ENCODE measurements at regions of chr14 and their contacts with region 1.

Region 1: GRCh38 chr14:22872033-22872832 is 693 bp downstream of the LRP10 start:
- DNase-seq: peak; percentile 79 to 93 (median 83)
- ATAC-seq: peak; percentile 71
- H3K4me3 ChIP-seq: peak overlapping the region; percentile 87
- H3K27ac ChIP-seq: peak overlapping the region; percentile 98
- H3K4me1 ChIP-seq: peaks cover 12 to 36% of the 10 kb centered on the region in 2 experiments
- H3K27me3 ChIP-seq: no peaks in the 10 kb centered on the region
- CTCF ChIP-seq: peak; percentile 86 to 98 (median 96)
- EP300 ChIP-seq: no peak
- POLR2A ChIP-seq: peak; percentile 30
- RAD21 ChIP-seq: peak; percentile 69 to 73

Region 2: DNA sequence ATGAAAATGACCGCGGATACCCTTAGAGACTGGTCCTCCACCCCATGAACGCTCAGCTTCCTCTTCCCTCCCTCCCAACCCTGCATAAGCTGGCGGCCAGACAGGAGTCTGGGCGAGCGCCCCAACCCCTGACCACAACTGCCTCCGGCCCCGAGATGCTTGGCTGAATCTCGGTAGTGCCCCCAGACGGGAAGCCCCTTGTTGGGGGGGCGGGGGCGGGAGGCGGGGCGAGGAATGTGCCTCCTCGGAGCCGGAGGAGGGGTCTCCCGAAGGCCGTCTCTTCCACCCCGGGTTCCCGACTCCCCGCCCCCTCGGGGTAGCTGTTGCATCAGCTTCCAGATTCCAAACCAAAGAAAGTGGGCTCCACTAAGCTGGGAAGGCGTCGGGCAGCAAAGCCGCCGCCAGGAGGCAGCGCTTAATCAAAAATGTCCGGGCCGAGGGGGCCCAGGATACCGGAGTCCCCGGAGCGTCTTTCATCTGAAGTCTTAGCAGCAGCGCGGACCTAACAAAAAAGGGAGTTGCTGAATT is 49.6 kb before region 1 on chr14:
- CTCF ChIA-PET with region 1: interaction called, 5 read pairs
- POLR2A ChIA-PET with region 1: interaction called, 5 read pairs
- in situ Hi-C with region 1: no loop called
- intact Hi-C with region 1: loop called (anchors 5 kb)
- DNase-seq: peak; percentile 77 to 87 (median 82)
- ATAC-seq: peak; percentile 88
- H3K4me3 ChIP-seq: no peak overlapping the region
- H3K27ac ChIP-seq: no peak overlapping the region
- H3K4me1 ChIP-seq: peaks cover 18 to 30% of the 10 kb centered on the region in 2 experiments; a peak in 4 of 5 replicates
- H3K27me3 ChIP-seq: no peaks in the 10 kb centered on the region
- CTCF ChIP-seq: peak; percentile 89 to 95 (median 91)
- EP300 ChIP-seq: 0 out of 2 replicates have a peak, but pooled peaks have one; percentile 5
- POLR2A ChIP-seq: no peak
- RAD21 ChIP-seq: peak; percentile 92 to 94

Region 3: GRCh38 chr14:22861651-22862050 is 10.6 kb before region 1 on chr14:
- CTCF ChIA-PET with region 1: no interaction called
- POLR2A ChIA-PET with region 1: interaction called, 10 read pairs
- in situ Hi-C with region 1: no loop called
- intact Hi-C with region 1: no loop called
- DNase-seq: no peak
- ATAC-seq: no peak
- H3K4me3 ChIP-seq: no peak overlapping the region
- H3K27ac ChIP-seq: no peak overlapping the region
- H3K4me1 ChIP-seq: peaks cover 0 to 11% of the 10 kb centered on the region in 2 experiments; a peak in 2 of 5 replicates
- H3K27me3 ChIP-seq: no peaks in the 10 kb centered on the region
- CTCF ChIP-seq: no peak
- EP300 ChIP-seq: no peak
- POLR2A ChIP-seq: no peak
- RAD21 ChIP-seq: no peak

Region 4: GRCh38 chr14:22886500-22887259 is 14.4 kb after region 1 on chr14:
- CTCF ChIA-PET with region 1: interaction called, 3 read pairs
- POLR2A ChIA-PET with region 1: interaction called, 60 read pairs
- in situ Hi-C with region 1: no loop called
- intact Hi-C with region 1: loop called (anchors 1 kb)
- DNase-seq: peak; percentile 91 to 93 (median 92)
- ATAC-seq: peak; percentile 84
- H3K4me3 ChIP-seq: peak overlapping the region; percentile 63
- H3K27ac ChIP-seq: peak overlapping the region; percentile 81
- H3K4me1 ChIP-seq: peaks cover 26 to 40% of the 10 kb centered on the region in 2 experiments
- H3K27me3 ChIP-seq: no peaks in the 10 kb centered on the region
- CTCF ChIP-seq: peak in 2 of 3 experiments; percentile 36 to 41; a peak in 4 of 6 replicates
- EP300 ChIP-seq: no peak
- POLR2A ChIP-seq: peak; percentile 84
- RAD21 ChIP-seq: no peak

Region 5: DNA sequence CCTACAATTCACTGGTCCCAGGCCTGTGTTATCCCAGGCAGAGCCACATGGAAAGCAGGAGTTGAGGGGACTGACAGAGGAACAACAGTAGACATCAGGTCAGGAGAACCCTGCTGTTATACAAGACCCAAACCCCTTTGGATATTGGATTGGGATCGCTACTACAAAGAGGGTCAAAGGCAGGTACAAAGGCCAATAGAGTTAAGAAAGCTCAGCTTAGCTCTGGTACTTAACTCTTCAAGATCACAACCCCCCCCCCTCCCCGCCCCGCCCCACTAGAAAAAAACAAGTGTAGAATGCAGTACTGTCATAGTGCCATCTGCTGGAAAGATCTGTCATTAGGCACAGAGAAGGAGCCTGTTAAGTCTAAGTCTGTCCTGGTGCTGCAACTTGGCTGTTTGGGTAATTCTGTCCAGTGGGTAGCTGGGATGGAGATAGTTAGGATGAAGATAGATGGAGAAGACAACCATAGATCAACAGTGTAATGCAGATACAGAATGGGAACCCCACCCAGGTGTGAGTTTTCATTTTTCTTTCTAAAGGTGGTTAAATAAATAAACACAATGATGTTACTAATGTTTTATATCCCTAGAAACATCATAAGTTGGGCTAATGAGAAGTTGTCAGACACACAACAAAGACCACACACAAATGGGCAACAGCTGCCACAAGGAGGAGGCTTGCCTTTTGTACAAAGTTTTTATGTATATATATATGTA is 28.0 kb after region 1 on chr14:
- CTCF ChIA-PET with region 1: interaction called, 18 read pairs
- POLR2A ChIA-PET with region 1: interaction called, 3 read pairs
- in situ Hi-C with region 1: no loop called
- intact Hi-C with region 1: loop called (anchors 1 kb)
- DNase-seq: peak; percentile 71 to 91 (median 79)
- ATAC-seq: peak; percentile 80
- H3K4me3 ChIP-seq: no peak overlapping the region
- H3K27ac ChIP-seq: no peak overlapping the region
- H3K4me1 ChIP-seq: peaks cover 5 to 39% of the 10 kb centered on the region in 2 experiments; a peak in 2 of 5 replicates
- H3K27me3 ChIP-seq: no peaks in the 10 kb centered on the region
- CTCF ChIP-seq: peak; percentile 73 to 84 (median 83)
- EP300 ChIP-seq: no peak
- POLR2A ChIP-seq: no peak
- RAD21 ChIP-seq: peak; percentile 57 to 68

Region 6: GRCh38 chr14:22918804-22919600 is 46.8 kb after region 1 on chr14 and contains the start of gene RBM23:
- CTCF ChIA-PET with region 1: no interaction called
- POLR2A ChIA-PET with region 1: interaction called, 7 read pairs
- in situ Hi-C with region 1: no loop called
- intact Hi-C with region 1: loop called (anchors 5 kb)
- DNase-seq: peak; percentile 95 to 100 (median 97)
- ATAC-seq: peak; percentile 96
- H3K4me3 ChIP-seq: peak within 1 kb of the TSS; percentile 68
- H3K27ac ChIP-seq: peak within 1 kb of the TSS; percentile 94
- H3K4me1 ChIP-seq: peaks cover 0 to 25% of the 10 kb centered on the region in 2 experiments; a peak in 4 of 5 replicates
- H3K27me3 ChIP-seq: no peaks in the 10 kb centered on the region
- CTCF ChIP-seq: peak in 1 of 3 experiments; percentile 8; a peak in 1 of 6 replicates
- EP300 ChIP-seq: no peak
- POLR2A ChIP-seq: peak; percentile 92
- RAD21 ChIP-seq: no peak
- polyA plus RNA-seq, gene RBM23: 67.8 to 102 TPM

Region 7: DNA sequence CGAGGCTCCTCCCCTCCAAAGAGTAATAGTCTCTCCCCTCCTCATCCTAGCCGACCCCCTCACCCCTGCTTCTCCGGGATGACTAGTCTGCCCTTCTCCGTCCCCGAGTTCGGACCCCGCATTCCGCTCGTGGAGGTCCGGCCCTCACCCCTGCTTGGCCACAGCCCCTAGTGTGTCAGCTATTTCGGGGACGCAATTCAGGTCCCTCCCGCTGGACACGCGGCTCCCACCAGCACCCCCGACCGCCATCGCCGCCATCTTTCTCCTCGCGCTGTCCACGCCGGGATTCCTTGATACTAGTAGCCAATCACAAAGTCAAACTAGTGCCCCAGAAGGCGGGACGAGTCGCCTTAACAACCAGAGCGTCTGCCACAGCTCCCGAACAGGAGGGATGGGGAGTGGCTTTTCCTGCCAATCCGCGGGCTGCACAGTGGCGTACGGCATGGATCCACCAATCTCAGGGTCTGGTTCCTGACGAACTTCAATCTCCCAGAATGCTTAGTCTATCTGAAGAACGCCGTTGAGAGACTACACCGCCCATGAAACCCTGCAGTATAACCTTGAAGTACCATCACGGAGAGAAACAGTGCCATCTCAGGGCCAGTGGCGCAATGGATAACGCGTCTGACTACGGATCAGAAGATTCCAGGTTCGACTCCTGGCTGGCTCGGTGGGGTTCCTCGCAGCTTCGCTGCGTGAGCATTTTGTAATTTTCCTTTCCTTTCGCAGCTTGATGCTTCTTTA is 57.0 kb after region 1 on chr14 and contains the start of gene PRMT5:
- CTCF ChIA-PET with region 1: no interaction called
- POLR2A ChIA-PET with region 1: interaction called, 3 read pairs
- in situ Hi-C with region 1: no loop called
- intact Hi-C with region 1: loop called (anchors 1 kb)
- DNase-seq: peak; percentile 94 to 99 (median 96)
- ATAC-seq: peak; percentile 96
- H3K4me3 ChIP-seq: peak within 1 kb of the TSS; percentile 80
- H3K27ac ChIP-seq: peak within 1 kb of the TSS; percentile 88
- H3K4me1 ChIP-seq: peaks cover 5 to 14% of the 10 kb centered on the region in 2 experiments; a peak in 3 of 5 replicates
- H3K27me3 ChIP-seq: no peaks in the 10 kb centered on the region
- CTCF ChIP-seq: peak in 1 of 3 experiments; percentile 26; a peak in 2 of 6 replicates
- EP300 ChIP-seq: peak; percentile 77
- POLR2A ChIP-seq: peak; percentile 99
- RAD21 ChIP-seq: no peak
- polyA plus RNA-seq, gene PRMT5: 114 to 155 TPM

Region 8: GRCh38 chr14:23068476-23069412 is 196.5 kb after region 1 on chr14:
- CTCF ChIA-PET with region 1: no interaction called
- POLR2A ChIA-PET with region 1: no interaction called
- in situ Hi-C with region 1: no loop called
- intact Hi-C with region 1: no loop called
- DNase-seq: peak; percentile 77 to 91 (median 82)
- ATAC-seq: peak; percentile 80
- H3K4me3 ChIP-seq: no peak overlapping the region
- H3K27ac ChIP-seq: peak overlapping the region; percentile 17; the same call in 1 of the 3 replicates
- H3K4me1 ChIP-seq: peaks cover 20 to 26% of the 10 kb centered on the region in 2 experiments
- H3K27me3 ChIP-seq: no peaks in the 10 kb centered on the region
- CTCF ChIP-seq: peak; percentile 99 to 100 (median 100)
- EP300 ChIP-seq: no peak
- POLR2A ChIP-seq: no peak
- RAD21 ChIP-seq: peak; percentile 84 to 91

Measured in K562 (cell line).